ENCODE measurements at regions of chr14 and their contacts with region 1.

Region 1: DNA sequence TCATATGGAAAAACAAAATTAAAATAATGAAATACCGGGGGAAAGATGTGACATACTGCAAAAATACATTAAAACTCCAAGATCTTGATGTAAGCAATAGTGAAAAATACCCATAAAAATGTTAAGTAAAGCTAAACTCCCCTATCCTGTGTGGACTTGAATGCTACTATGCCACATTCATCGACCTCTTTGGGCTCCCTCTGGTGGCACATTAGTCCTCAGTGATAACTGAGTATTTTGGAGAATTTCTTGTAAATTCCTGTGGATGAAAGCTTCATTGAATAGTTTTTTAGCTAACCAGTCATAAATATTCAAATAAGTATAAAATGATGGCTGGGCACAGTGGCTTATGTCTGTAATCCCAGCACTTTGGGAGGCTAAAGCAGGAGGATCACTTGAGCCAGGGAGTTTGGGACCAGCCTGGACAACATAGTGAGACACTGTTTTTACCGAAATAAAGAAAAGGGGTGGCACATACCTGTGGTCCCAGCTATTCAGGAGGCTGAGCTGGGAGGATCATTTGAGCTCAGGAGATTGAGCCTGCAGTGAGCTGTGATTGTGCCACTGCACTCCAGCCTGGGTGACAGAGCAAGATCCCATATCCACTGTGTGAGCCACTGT is 42.4 kb upstream of the SGPP1 start:
- DNase-seq: peak; percentile 54
- H3K4me3 Mint-ChIP-seq: no peak overlapping the region
- H3K27ac Mint-ChIP-seq: no peak overlapping the region
- H3K4me1 Mint-ChIP-seq: peaks cover 2% of the 10 kb centered on the region
- H3K27me3 Mint-ChIP-seq: no peaks in the 10 kb centered on the region

Region 2: DNA sequence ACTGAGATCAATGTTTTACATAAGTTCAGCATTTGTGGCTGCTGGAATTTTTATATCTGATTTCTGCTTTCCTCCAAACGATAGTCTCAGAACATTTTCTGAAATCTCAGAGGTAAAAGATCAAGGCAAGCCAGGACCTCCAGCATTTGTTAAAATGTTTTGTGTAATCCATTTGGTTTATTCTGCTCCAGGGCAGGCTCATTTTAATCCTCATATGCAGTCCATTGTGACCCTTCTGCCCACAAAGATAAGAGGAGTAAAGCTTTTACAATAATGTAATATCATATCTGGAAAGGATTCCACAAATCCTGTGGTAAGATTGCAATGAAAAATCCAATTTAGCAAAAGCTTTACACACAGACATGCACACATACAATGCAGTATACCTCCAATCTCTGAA is 669.7 kb before region 1 on chr14:
- CTCF ChIA-PET with region 1: no interaction called
- POLR2A ChIA-PET with region 1: no interaction called
- intact Hi-C with region 1: no loop called
- DNase-seq: no peak
- H3K4me3 Mint-ChIP-seq: no peak overlapping the region
- H3K27ac Mint-ChIP-seq: no peak overlapping the region
- H3K4me1 Mint-ChIP-seq: no peaks in the 10 kb centered on the region
- H3K27me3 Mint-ChIP-seq: no peaks in the 10 kb centered on the region

Region 3: DNA sequence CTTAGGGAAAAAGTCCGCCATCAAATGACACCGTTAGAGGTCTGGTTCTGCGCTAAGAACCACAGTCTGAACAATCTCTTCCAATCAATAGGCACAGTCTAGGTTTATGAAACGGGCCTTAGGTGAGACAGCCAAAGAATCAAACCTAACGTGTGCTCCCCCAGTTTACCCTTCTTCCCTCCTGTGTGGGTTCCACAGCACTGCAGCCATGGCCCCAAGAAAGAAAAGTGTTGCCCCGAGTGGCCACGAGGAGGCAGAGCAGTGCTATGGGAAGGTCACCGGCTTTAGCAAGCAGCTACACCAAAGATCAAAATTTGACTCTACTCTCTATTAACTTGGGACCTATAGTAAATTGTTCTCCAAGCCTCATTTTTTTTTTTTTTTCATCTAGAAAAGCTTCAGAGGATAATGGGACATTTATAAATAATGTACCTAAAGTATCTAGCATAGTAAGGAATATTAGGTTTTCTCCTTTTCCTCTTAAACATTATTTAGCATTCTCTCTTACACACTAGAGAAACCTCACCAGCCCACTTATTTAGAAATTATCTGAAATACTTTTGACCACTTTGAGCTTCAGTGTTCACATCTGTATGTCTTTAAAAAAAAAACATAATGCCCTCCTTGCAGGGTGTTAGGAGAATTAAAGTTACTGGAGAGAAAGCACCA is 381.4 kb before region 1 on chr14:
- CTCF ChIA-PET with region 1: interaction called, 18 read pairs
- POLR2A ChIA-PET with region 1: no interaction called
- intact Hi-C with region 1: loop called (anchors 1 kb)
- DNase-seq: peak; percentile 76
- H3K4me3 Mint-ChIP-seq: no peak overlapping the region
- H3K27ac Mint-ChIP-seq: no peak overlapping the region
- H3K4me1 Mint-ChIP-seq: peaks cover under 1% of the 10 kb centered on the region
- H3K27me3 Mint-ChIP-seq: no peaks in the 10 kb centered on the region

Region 4: GRCh38 chr14:63650256-63650952 is 119.9 kb before region 1 on chr14:
- CTCF ChIA-PET with region 1: interaction called, 10 read pairs
- POLR2A ChIA-PET with region 1: no interaction called
- intact Hi-C with region 1: no loop called
- DNase-seq: peak; percentile 75
- H3K4me3 Mint-ChIP-seq: peak overlapping the region; percentile 46
- H3K27ac Mint-ChIP-seq: peak overlapping the region; percentile 93
- H3K4me1 Mint-ChIP-seq: peaks cover 40% of the 10 kb centered on the region
- H3K27me3 Mint-ChIP-seq: no peaks in the 10 kb centered on the region

Measured in activated CD4-positive, alpha-beta memory T cell treated with anti-CD3 and anti-CD28 coated beads for 36 hours (primary cell).